Heart right ventricle (tissue), 16 donors: ENCODE measurements at regions of chr11 and their contacts with region 1.

Region 1: GRCh38 chr11:125263268-125263790 is 98.8 kb downstream of the PKNOX2 start:
- DNase-seq: peak; percentile 82 to 85
- ATAC-seq: peak; percentile 85 to 92 (median 90)
- H3K4me3 ChIP-seq: peak overlapping the region in 3 of 10 donors; percentile 5 to 23 (median 10)
- H3K27ac ChIP-seq: peak overlapping the region in 8 of 10 donors; percentile 48 to 70 (median 57)
- H3K4me1 ChIP-seq: peaks cover 6 to 39% (median 20%) of the 10 kb centered on the region in 9 donors
- H3K27me3 ChIP-seq: peaks cover 5 to 37% (median 30%) of the 10 kb centered on the region in 7 donors
- CTCF ChIP-seq: no peak

Region 2: GRCh38 chr11:125170510-125171031 is 92.8 kb before region 1 on chr11:
- intact Hi-C with region 1: loop called in 2 of 10 experiments (anchors 10 kb)
- DNase-seq: peak; percentile 78 to 80
- ATAC-seq: peak; percentile 69 to 83 (median 77)
- H3K4me3 ChIP-seq: peak overlapping the region in 5 of 10 donors; percentile 6 to 36 (median 15)
- H3K27ac ChIP-seq: peak overlapping the region; percentile 49 to 80 (median 72)
- H3K4me1 ChIP-seq: peaks cover 2 to 59% (median 29%) of the 10 kb centered on the region in 9 donors
- H3K27me3 ChIP-seq: peaks cover 0 to 41% (median 15%) of the 10 kb centered on the region in 7 donors
- CTCF ChIP-seq: no peak

Region 3: GRCh38 chr11:125320347-125321076 is 57.2 kb after region 1 on chr11:
- intact Hi-C with region 1: no loop called
- DNase-seq: no peak
- ATAC-seq: no peak
- H3K4me3 ChIP-seq: no peak overlapping the region
- H3K27ac ChIP-seq: no peak overlapping the region
- H3K4me1 ChIP-seq: peaks cover 0 to 5% (median 3%) of the 10 kb centered on the region in 9 donors
- H3K27me3 ChIP-seq: peaks cover 0 to 4% (median 0%) of the 10 kb centered on the region in 7 donors
- CTCF ChIP-seq: no peak

Region 4: DNA sequence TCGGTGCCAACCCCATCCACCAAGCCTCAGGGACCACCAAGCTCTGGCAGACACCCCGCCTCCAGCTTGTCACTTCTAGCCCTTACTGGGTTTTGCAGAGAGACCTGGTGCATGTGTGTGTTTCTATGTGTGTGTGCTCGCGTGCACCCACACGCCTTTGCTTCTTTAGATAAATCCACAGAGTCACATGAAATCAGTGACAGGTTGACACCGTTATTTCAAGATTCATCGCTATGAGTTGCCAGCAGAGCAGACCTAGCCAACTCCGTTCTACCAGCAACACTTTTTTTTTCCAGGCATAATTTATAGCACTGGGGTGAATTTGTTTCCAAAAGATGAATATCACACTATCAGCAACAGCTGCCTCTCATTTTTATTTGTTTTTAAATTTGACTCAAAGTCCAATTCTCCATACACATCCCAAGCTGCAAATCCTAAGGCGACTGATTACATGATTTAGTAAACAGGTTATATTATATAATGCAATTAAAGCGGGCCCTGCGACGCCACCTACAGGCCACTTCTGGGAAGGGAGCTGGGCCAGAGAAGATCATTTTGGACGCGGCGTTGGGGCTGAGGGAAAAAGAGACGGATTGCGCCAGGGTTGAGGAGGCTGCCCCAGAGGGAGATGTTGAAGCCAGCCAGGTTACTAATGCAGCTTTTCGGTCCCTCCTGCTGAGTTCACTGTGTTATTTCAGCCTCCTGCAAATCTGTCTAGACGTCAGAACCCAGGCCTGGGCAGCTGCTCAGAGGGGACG is 82.3 kb after region 1 on chr11:
- intact Hi-C with region 1: loop called in 1 of 10 experiments (anchors 10 kb)
- DNase-seq: peak; percentile 81 to 85
- ATAC-seq: peak; percentile 76 to 88 (median 82)
- H3K4me3 ChIP-seq: no peak overlapping the region
- H3K27ac ChIP-seq: peak overlapping the region in 9 of 10 donors; percentile 31 to 81 (median 64)
- H3K4me1 ChIP-seq: peaks cover 3 to 43% (median 23%) of the 10 kb centered on the region in 9 donors
- H3K27me3 ChIP-seq: no peaks in the 10 kb centered on the region
- CTCF ChIP-seq: peak; percentile 75 to 93 (median 88)